ENCODE measurements at regions of chr2 and their contacts with region 1.

Region 1: GRCh38 chr2:197416268-197416667 is 18.6 kb downstream of the SF3B1 start:
- DNase-seq: no peak
- H3K4me3 ChIP-seq: no peak overlapping the region
- H3K27ac ChIP-seq: no peak overlapping the region
- H3K4me1 ChIP-seq: no peaks in the 10 kb centered on the region
- H3K27me3 ChIP-seq: no peaks in the 10 kb centered on the region
- CTCF ChIP-seq: no peak

Region 2: GRCh38 chr2:197279997-197280746 is 136.1 kb before region 1 on chr2:
- CTCF ChIA-PET with region 1: no interaction called
- dilution Hi-C with region 1: no loop called
- in situ Hi-C with region 1: no loop called
- intact Hi-C with region 1: no loop called
- DNase-seq: no peak
- H3K4me3 ChIP-seq: no peak overlapping the region
- H3K27ac ChIP-seq: no peak overlapping the region
- H3K4me1 ChIP-seq: no peaks in the 10 kb centered on the region
- H3K27me3 ChIP-seq: no peaks in the 10 kb centered on the region
- CTCF ChIP-seq: no peak

Region 3: GRCh38 chr2:197383823-197384222 is 32.4 kb before region 1 on chr2:
- CTCF ChIA-PET with region 1: no interaction called
- dilution Hi-C with region 1: no loop called
- in situ Hi-C with region 1: no loop called
- intact Hi-C with region 1: no loop called
- DNase-seq: no peak
- H3K4me3 ChIP-seq: no peak overlapping the region
- H3K27ac ChIP-seq: no peak overlapping the region
- H3K4me1 ChIP-seq: no peaks in the 10 kb centered on the region
- H3K27me3 ChIP-seq: no peaks in the 10 kb centered on the region
- CTCF ChIP-seq: no peak

Region 4: DNA sequence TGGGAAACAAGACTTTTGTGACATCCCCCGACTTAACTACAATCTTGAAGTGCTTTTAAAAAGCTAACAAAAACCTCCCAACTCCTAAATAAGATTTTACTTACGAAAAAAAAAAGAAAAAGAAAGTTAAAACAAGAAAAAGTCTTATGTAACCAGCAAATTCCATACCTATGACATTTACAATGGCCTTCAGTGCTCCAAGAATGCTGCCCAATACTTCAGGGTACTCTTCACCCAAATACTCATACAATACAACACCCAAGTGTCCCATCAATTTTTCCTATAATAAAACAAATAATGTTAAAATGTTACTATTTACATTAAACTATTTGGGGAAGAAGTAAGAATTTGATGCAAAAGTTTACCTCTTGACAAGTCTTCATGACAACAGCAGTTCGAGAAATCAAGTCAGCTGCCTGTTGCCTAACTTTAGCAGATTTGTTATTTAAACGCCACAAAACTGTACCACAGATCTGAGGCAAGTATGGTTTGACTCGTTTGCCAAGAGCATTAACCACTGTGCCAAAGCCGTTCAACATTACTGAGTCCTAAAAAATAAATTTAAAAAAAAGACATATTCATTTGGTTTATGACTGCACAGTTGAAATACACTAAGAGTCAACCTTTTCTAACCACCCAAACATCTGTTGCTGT is 16.3 kb before region 1 on chr2:
- CTCF ChIA-PET with region 1: no interaction called
- dilution Hi-C with region 1: no loop called
- in situ Hi-C with region 1: no loop called
- intact Hi-C with region 1: loop called (anchors 2 kb)
- DNase-seq: no peak
- H3K4me3 ChIP-seq: no peak overlapping the region
- H3K27ac ChIP-seq: no peak overlapping the region
- H3K4me1 ChIP-seq: peaks cover 8% of the 10 kb centered on the region
- H3K27me3 ChIP-seq: no peaks in the 10 kb centered on the region
- CTCF ChIP-seq: no peak

Region 5: GRCh38 chr2:197434541-197435513 is 18.6 kb after region 1 on chr2 and contains the start of gene SF3B1:
- CTCF ChIA-PET with region 1: no interaction called
- dilution Hi-C with region 1: no loop called
- in situ Hi-C with region 1: no loop called
- intact Hi-C with region 1: no loop called
- DNase-seq: peak; percentile 98
- H3K4me3 ChIP-seq: peak within 1 kb of the TSS; percentile 76 to 91 (median 88)
- H3K27ac ChIP-seq: peak within 1 kb of the TSS; percentile 94
- H3K4me1 ChIP-seq: peaks cover 12% of the 10 kb centered on the region
- H3K27me3 ChIP-seq: no peaks in the 10 kb centered on the region
- CTCF ChIP-seq: no peak
- total RNA-seq, gene SF3B1: 132 to 153 TPM

Measured in mammary epithelial cell (primary cell).